Left ventricle myocardium inferior (tissue), 1 donor: ENCODE measurements at regions of chr18 and their contacts with region 1.

Region 1: DNA sequence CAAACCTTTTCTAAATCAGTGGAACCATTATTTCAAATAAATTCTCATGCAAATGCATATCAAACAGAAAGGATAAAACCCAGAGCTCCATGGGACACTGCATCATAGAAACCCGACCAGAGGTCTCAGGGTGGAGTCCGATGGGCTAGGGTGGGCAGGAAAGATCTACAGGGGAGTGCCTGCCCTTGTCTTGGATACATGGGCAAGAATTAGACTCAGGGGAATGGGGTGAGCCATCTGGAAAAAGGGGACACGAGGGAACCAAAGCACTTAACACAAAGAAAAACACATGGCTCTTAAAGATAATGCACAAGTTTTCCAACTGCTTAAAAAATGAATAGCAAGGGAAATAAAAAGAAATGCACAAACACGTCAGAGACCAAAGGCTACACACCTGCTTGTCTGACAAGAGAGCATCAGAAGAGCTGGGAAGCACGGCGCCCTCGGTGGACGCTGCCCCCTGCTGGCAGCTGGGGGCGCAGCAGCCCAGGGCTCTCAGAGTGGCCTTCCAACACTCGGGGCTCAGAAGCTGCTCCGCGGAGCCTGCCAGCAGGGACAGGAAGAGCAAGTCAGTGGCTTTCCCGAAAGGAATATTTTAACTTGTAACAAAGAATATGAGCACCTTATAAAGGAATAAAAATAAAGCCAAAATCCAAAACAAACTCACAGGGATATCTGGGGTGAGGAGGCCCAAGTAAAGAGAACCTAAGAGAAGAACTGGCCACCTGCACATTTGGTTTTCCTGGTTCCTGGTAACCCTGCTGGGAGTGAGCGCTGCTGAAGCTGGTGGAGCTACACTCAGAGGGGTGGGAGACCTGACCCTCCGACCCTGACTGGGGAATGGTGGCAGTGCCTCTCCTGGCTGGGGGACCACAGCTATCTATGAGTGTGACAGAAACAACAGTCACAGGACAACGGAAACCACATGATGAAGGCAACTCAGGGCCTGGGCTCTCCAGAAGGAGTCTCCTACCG is 54.5 kb downstream of the SIGLEC15 start:
- DNase-seq: peak; percentile 60
- H3K4me3 ChIP-seq: no peak overlapping the region
- H3K27ac ChIP-seq: no peak overlapping the region
- H3K4me1 ChIP-seq: peaks cover 6% of the 10 kb centered on the region
- H3K27me3 ChIP-seq: no peaks in the 10 kb centered on the region
- CTCF ChIP-seq: peak; percentile 100

Region 2: DNA sequence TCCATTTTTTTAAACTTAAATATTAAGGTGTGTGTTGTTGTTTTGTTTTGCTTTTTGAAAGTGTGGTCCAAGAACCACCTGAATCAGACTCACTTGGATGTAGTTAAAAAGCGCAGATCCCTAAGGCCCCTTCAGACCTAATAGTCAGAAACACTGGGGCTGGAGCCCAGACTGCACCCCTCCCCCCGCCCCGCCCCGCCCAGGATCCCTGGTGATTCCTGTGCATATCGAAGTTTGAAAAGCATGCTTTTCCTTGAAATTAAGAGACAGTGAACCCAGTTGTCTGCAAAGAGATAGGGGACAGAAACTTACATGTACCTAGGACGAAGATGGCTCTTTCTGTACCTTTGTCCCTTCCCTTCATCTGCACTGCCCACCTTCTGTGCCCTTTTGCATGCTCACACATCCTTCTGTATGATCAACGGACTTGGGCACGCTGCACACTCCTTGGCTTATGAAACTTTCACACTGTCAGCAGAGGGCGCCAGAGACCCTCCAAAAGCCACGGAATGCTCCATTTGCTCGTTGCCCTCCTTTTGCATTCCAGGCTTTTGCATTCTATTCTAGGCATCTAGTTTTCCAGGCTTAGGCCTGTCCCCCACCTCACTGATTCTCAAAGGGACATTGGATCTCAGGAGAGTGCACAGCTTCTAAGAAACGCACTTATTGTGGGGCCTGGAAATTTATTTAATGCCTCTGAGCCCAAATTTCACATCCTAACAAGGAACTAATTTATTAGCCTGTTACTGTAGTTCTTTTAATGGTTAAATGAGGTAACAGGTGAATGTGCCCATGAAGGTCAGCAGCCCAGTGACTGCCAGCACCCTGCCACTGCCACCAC is 188.8 kb before region 1 on chr18:
- intact Hi-C with region 1: loop called (anchors 2 kb)
- DNase-seq: peak; percentile 73
- H3K4me3 ChIP-seq: no peak overlapping the region
- H3K27ac ChIP-seq: no peak overlapping the region
- H3K4me1 ChIP-seq: no peaks in the 10 kb centered on the region
- H3K27me3 ChIP-seq: no peaks in the 10 kb centered on the region
- CTCF ChIP-seq: peak; percentile 85

Region 3: GRCh38 chr18:45820106-45820745 is 59.7 kb before region 1 on chr18:
- intact Hi-C with region 1: no loop called
- DNase-seq: no peak
- H3K4me3 ChIP-seq: no peak overlapping the region
- H3K27ac ChIP-seq: no peak overlapping the region
- H3K4me1 ChIP-seq: peaks cover under 1% of the 10 kb centered on the region
- H3K27me3 ChIP-seq: no peaks in the 10 kb centered on the region
- CTCF ChIP-seq: no peak

Region 4: DNA sequence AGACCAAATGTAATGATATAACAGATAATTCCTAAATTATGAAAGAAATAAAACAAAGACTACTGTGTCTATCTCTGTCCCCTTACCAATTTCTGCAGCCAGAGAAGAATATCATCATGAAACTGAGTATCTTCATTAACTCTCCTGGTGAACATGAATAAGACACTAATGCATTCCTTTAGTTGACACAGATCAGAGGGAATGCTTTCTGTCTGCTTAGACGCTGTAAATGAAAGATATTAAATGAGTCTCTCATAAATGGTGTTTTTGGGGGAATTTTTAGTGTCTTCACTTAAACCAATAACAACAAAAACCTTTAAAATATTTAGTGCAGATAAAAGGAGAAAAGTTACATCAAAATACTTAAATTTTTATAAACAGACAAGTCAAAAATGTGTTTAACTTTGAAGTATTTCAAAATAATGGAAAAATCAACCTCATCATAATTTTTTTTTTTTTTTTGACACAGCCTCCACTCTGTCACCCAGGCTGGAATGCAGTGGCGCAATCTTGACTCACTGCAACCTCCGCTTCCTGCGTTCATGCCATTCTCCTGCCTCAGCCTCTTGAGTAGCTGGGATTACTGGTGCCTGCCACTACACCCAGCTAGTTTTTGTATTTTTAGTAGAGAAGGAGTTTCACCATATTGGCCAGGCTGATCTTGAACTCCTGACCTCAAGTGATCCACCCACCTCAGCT is 71.2 kb after region 1 on chr18:
- intact Hi-C with region 1: no loop called
- DNase-seq: no peak
- H3K4me3 ChIP-seq: no peak overlapping the region
- H3K27ac ChIP-seq: no peak overlapping the region
- H3K4me1 ChIP-seq: peaks cover 11% of the 10 kb centered on the region
- H3K27me3 ChIP-seq: no peaks in the 10 kb centered on the region
- CTCF ChIP-seq: no peak